PC-9 (cell line): ENCODE measurements at regions of chr19 and their contacts with region 1.

Region 1: GRCh38 chr19:10219678-10220077 is 11.5 kb downstream of the S1PR2 start:
- DNase-seq: peak; percentile 31 to 68
- H3K4me3 ChIP-seq: no peak overlapping the region
- H3K27ac ChIP-seq: no peak overlapping the region
- H3K4me1 ChIP-seq: peaks cover 30% of the 10 kb centered on the region
- H3K27me3 ChIP-seq: no peaks in the 10 kb centered on the region
- CTCF ChIP-seq: peak; percentile 69

Region 2: GRCh38 chr19:10085641-10086590 is 133.8 kb before region 1 on chr19 and contains the start of gene SHFL:
- CTCF ChIA-PET with region 1: interaction called, 11 read pairs
- POLR2A ChIA-PET with region 1: no interaction called
- intact Hi-C with region 1: no loop called
- DNase-seq: peak; percentile 46 to 78
- H3K4me3 ChIP-seq: peak within 1 kb of the TSS; percentile 97
- H3K27ac ChIP-seq: no peak within 1 kb of the TSS
- H3K4me1 ChIP-seq: no peaks in the 10 kb centered on the region
- H3K27me3 ChIP-seq: no peaks in the 10 kb centered on the region
- CTCF ChIP-seq: no peak
- total RNA-seq, gene SHFL: 25.6 and 30.6 TPM in 2 replicates

Region 3: DNA sequence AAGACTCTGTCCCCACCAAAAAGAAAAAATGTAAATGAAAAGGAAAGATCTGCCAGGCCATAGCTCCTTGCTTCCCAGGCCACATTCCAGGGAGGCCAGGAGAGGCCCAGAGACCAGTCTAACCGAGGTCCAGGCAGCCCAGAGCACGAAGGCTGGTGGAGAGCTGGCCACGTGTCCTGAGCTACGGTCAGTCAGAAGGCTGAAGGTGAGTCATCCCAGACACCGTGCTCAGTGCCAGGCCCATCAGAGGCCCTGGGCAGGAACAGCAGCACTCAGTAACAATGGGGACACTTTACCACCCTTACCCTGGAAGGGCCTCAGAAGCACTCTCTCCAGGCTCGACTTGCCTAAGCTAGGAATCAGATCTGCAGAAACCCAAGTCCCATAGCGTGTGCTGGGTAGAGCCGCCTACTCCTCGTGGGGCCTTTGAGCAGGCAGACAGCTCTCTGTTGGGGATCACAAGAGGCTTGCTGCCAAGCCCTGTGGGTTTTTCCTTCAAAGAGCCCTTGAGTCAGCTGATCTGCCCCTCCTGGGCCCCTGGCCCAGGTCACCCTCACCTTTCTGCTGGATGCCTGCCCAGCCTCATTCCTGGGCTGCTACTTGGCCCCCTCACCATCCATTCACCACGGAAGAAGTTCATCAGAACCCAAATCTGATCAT is 13.3 kb before region 1 on chr19:
- CTCF ChIA-PET with region 1: interaction called, 17 read pairs
- POLR2A ChIA-PET with region 1: interaction called, 3 read pairs
- intact Hi-C with region 1: no loop called
- DNase-seq: peak; percentile 89 to 91
- H3K4me3 ChIP-seq: no peak overlapping the region
- H3K27ac ChIP-seq: peak overlapping the region; percentile 67
- H3K4me1 ChIP-seq: peaks cover 45% of the 10 kb centered on the region
- H3K27me3 ChIP-seq: no peaks in the 10 kb centered on the region
- CTCF ChIP-seq: no peak

Region 4: DNA sequence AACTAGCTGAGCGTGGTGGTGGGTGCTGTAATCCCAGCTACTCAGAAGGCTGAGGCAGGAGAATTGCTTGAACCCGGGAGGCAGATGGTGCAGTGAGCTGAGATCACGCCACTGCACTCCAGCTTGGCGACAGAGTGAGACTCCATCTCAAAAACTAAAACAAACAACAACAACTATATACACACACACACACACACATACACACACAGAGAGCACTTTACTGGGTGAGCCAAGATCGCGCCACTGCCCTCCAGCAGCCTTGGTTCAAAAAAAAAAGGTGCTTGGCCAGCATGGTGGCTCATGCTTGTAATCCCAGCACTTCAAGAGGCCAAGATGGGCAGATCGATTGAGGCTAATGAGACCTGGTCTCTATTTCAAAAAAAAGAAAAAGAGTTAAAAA is 377.3 kb after region 1 on chr19:
- CTCF ChIA-PET with region 1: no interaction called
- POLR2A ChIA-PET with region 1: interaction called, 31 read pairs
- intact Hi-C with region 1: no loop called
- DNase-seq: no peak
- H3K4me3 ChIP-seq: no peak overlapping the region
- H3K27ac ChIP-seq: no peak overlapping the region
- H3K4me1 ChIP-seq: peaks cover 18% of the 10 kb centered on the region
- H3K27me3 ChIP-seq: no peaks in the 10 kb centered on the region
- CTCF ChIP-seq: no peak